GM12878 (cell line): ENCODE measurements at regions of chr7 and their contacts with region 1.

Region 1: GRCh38 chr7:6330657-6331056 is 58.2 kb upstream of the CYTH3 start:
- DNase-seq: no peak
- ATAC-seq: no peak
- H3K4me3 ChIP-seq: no peak overlapping the region
- H3K27ac ChIP-seq: no peak overlapping the region
- H3K4me1 ChIP-seq: no peaks in the 10 kb centered on the region
- H3K27me3 ChIP-seq: no peaks in the 10 kb centered on the region
- CTCF ChIP-seq: no peak
- EP300 ChIP-seq: no peak
- POLR2A ChIP-seq: no peak
- RAD21 ChIP-seq: no peak

Region 2: GRCh38 chr7:5854738-5855137 is 475.9 kb before region 1 on chr7:
- CTCF ChIA-PET with region 1: no interaction called
- POLR2A ChIA-PET with region 1: no interaction called
- RAD21 ChIA-PET with region 1: interaction called, 3 read pairs
- SMC1A ChIA-PET with region 1: interaction called, 3 read pairs
- in situ Hi-C with region 1: loop called (anchors 5 kb)
- intact Hi-C with region 1: loop called (anchors 10 kb)
- DNase-seq: no peak
- ATAC-seq: no peak
- H3K4me3 ChIP-seq: no peak overlapping the region
- H3K27ac ChIP-seq: no peak overlapping the region
- H3K4me1 ChIP-seq: no peaks in the 10 kb centered on the region
- H3K27me3 ChIP-seq: no peaks in the 10 kb centered on the region
- CTCF ChIP-seq: no peak
- EP300 ChIP-seq: no peak
- POLR2A ChIP-seq: no peak
- RAD21 ChIP-seq: no peak